ENCODE measurements at regions of chr9 and their contacts with region 1.

Region 1: DNA sequence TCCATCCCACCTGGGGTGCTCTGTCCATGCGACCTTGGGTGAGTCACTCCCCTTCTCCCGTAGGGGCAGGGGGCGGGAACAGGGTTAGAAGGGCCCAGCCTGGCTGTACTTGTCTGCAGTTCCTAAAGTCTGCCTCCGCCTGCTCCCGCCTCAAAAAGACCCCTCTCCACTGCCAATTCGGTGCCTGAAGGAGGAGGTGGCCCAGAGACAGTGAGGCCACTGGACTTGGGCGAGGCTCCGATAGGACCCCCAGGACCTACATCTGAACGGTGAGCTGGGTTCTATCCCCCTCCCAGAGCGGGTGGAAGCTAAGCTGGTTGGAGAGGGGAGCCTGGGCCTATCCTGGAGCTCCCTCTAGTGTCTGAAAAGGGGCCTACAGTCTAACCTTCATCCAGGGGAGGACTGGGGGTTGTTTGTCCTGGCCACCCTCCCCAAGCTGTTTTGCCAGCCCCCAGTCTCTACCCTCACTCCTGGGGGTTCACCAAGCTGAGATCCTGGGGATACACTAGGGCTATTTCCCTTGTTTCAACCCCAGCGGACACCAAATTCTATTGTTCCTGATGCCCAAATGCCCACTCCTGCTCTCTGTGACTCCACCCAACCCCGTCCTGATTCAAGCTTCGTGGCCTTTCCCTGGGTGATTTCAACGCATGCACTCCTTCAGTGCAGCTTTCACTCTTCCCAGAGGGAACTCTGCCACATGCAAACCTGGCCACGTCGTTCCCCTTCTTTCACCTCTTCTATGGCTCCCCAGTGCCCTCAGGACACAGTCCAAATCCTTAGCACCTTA is 6.1 kb upstream of the CRB2 start:
- DNase-seq: peak; percentile 85 to 89 (median 87)
- ATAC-seq: peak; percentile 86
- H3K4me3 ChIP-seq: peak overlapping the region; percentile 21; the same call in 1 of the 2 replicates
- H3K27ac ChIP-seq: no peak overlapping the region; the same call in 2 of the 3 replicates
- H3K4me1 ChIP-seq: peaks cover 10 to 32% of the 10 kb centered on the region in 2 experiments; a peak in 3 of 5 replicates
- H3K27me3 ChIP-seq: peaks cover 2 to 15% of the 10 kb centered on the region in 2 experiments; a peak in 3 of 5 replicates
- CTCF ChIP-seq: peak; percentile 93 to 96 (median 96)
- EP300 ChIP-seq: no peak
- POLR2A ChIP-seq: no peak
- RAD21 ChIP-seq: peak; percentile 98 to 99

Region 2: GRCh38 chr9:122464633-122465567 is 885.0 kb before region 1 on chr9:
- CTCF ChIA-PET with region 1: no interaction called
- POLR2A ChIA-PET with region 1: no interaction called
- in situ Hi-C with region 1: loop called (anchors 10 kb)
- intact Hi-C with region 1: loop called (anchors 2 kb)
- DNase-seq: peak; percentile 51 to 82 (median 64)
- ATAC-seq: peak; percentile 92
- H3K4me3 ChIP-seq: peak overlapping the region; percentile 28
- H3K27ac ChIP-seq: no peak overlapping the region
- H3K4me1 ChIP-seq: peaks cover 0 to 3% of the 10 kb centered on the region in 2 experiments; a peak in 1 of 5 replicates
- H3K27me3 ChIP-seq: no peaks in the 10 kb centered on the region; a peak in 1 of 5 replicates
- CTCF ChIP-seq: peak; percentile 73 to 92 (median 78)
- EP300 ChIP-seq: no peak
- POLR2A ChIP-seq: no peak
- RAD21 ChIP-seq: peak; percentile 87 to 88

Region 3: DNA sequence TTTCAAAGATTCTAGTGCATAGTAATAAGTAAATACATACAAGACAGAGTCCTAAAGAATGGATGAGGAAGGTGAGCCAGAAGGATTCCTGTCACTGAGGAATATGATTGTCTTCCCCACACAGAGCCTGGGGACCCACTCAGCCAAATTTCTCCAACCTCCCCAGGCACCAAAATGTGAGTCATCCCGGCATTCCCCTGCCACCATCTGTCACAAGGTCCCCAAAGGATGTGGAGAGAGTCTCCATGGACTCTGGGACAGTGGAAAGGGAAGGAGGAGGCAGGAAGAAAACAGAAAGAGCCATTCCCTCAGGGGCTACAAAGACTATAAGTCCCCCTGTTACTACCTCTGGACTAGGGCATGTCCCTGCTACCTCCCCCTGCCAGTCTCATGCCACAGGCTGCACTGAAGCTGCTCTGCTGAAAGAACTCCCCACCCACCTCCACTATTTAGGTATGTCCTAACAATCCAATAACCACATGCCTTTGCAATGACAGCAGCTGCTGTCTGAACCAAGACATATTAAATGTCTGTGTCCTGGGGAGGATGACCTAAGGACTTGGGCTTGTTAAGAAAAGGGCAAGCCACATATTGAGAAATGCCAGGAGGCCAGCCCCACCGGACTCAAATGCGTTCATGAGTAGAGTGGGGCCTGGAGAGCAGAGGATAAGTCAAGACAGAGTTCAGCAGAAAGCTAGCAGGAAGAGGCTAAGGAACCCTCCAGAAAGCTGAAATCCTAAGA is 571.8 kb before region 1 on chr9:
- CTCF ChIA-PET with region 1: no interaction called
- POLR2A ChIA-PET with region 1: no interaction called
- in situ Hi-C with region 1: no loop called
- intact Hi-C with region 1: no loop called
- DNase-seq: no peak
- ATAC-seq: no peak
- H3K4me3 ChIP-seq: no peak overlapping the region
- H3K27ac ChIP-seq: no peak overlapping the region
- H3K4me1 ChIP-seq: no peaks in the 10 kb centered on the region
- H3K27me3 ChIP-seq: peaks cover 7 to 9% of the 10 kb centered on the region in 2 experiments; a peak in 3 of 5 replicates
- CTCF ChIP-seq: no peak
- EP300 ChIP-seq: no peak
- POLR2A ChIP-seq: no peak
- RAD21 ChIP-seq: no peak

Region 4: GRCh38 chr9:122996586-122996985 is 353.3 kb before region 1 on chr9:
- CTCF ChIA-PET with region 1: no interaction called
- POLR2A ChIA-PET with region 1: no interaction called
- in situ Hi-C with region 1: no loop called
- intact Hi-C with region 1: loop called (anchors 5 kb)
- DNase-seq: no peak
- ATAC-seq: no peak
- H3K4me3 ChIP-seq: no peak overlapping the region
- H3K27ac ChIP-seq: no peak overlapping the region
- H3K4me1 ChIP-seq: peaks cover 0 to 9% of the 10 kb centered on the region in 2 experiments; a peak in 2 of 5 replicates
- H3K27me3 ChIP-seq: no peaks in the 10 kb centered on the region
- CTCF ChIP-seq: no peak
- EP300 ChIP-seq: no peak
- POLR2A ChIP-seq: no peak
- RAD21 ChIP-seq: no peak

Region 5: GRCh38 chr9:123102375-123103110 is 247.3 kb before region 1 on chr9:
- CTCF ChIA-PET with region 1: interaction called, 25 read pairs
- POLR2A ChIA-PET with region 1: interaction called, 5 read pairs
- in situ Hi-C with region 1: no loop called
- intact Hi-C with region 1: loop called (anchors 5 kb)
- DNase-seq: no peak
- ATAC-seq: peak; percentile 48
- H3K4me3 ChIP-seq: no peak overlapping the region
- H3K27ac ChIP-seq: no peak overlapping the region
- H3K4me1 ChIP-seq: no peaks in the 10 kb centered on the region
- H3K27me3 ChIP-seq: no peaks in the 10 kb centered on the region
- CTCF ChIP-seq: peak; percentile 19 to 44 (median 33); a peak in 4 of 6 replicates
- EP300 ChIP-seq: no peak
- POLR2A ChIP-seq: no peak
- RAD21 ChIP-seq: peak in 1 of 2 experiments; percentile 44; a peak in 2 of 4 replicates

Region 6: GRCh38 chr9:123262338-123262737 is 87.5 kb before region 1 on chr9:
- CTCF ChIA-PET with region 1: no interaction called
- POLR2A ChIA-PET with region 1: no interaction called
- in situ Hi-C with region 1: no loop called
- intact Hi-C with region 1: no loop called
- DNase-seq: no peak
- ATAC-seq: no peak
- H3K4me3 ChIP-seq: no peak overlapping the region
- H3K27ac ChIP-seq: no peak overlapping the region
- H3K4me1 ChIP-seq: peaks cover 9 to 32% of the 10 kb centered on the region in 2 experiments
- H3K27me3 ChIP-seq: no peaks in the 10 kb centered on the region
- CTCF ChIP-seq: no peak
- EP300 ChIP-seq: no peak
- POLR2A ChIP-seq: no peak
- RAD21 ChIP-seq: no peak

Region 7: DNA sequence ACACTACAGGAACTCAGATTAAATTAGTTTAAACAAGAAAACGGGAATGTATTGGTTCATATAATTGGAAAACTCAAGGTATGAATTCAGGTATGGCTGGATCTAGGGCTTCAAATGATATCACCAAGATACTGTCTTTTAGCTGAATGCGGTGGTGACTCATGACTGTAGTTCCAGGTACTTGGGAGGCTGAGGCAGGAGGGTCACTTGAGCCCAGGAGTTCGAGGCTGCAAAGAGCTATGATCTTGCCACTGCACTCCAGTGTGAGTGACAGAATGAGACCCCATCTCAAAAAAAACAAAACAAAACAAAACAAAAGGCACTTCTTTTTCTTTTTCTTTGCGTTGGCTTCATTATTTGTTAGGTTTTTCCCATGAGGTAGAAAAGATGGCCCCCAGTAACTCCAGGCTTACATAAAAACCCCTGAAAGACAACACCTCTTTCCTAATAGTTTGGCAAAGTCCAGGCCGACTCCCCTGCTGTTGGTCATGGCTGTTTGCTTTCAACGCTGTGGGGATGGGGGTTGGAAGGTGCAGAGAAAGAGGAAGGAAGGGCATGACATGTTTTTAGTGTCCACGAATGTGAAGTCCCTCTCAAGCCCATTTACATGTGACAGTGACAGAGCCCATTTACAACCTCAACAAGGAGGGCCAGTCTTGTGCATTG is 33.7 kb before region 1 on chr9:
- CTCF ChIA-PET with region 1: no interaction called
- POLR2A ChIA-PET with region 1: no interaction called
- in situ Hi-C with region 1: no loop called
- intact Hi-C with region 1: no loop called
- DNase-seq: peak in 1 of 4 experiments; percentile 13
- ATAC-seq: peak; percentile 58
- H3K4me3 ChIP-seq: no peak overlapping the region
- H3K27ac ChIP-seq: peak overlapping the region; percentile 57; the same call in 2 of the 3 replicates
- H3K4me1 ChIP-seq: peaks cover 22 to 27% of the 10 kb centered on the region in 2 experiments; a peak in 4 of 5 replicates
- H3K27me3 ChIP-seq: no peaks in the 10 kb centered on the region; a peak in 1 of 5 replicates
- CTCF ChIP-seq: no peak
- EP300 ChIP-seq: no peak
- POLR2A ChIP-seq: no peak
- RAD21 ChIP-seq: no peak

Region 8: GRCh38 chr9:123389070-123389469 is 39.2 kb after region 1 on chr9:
- CTCF ChIA-PET with region 1: interaction called, 75 read pairs
- POLR2A ChIA-PET with region 1: no interaction called
- in situ Hi-C with region 1: loop called (anchors 5 kb)
- intact Hi-C with region 1: loop called (anchors 1 kb)
- DNase-seq: no peak
- ATAC-seq: no peak
- H3K4me3 ChIP-seq: no peak overlapping the region
- H3K27ac ChIP-seq: no peak overlapping the region
- H3K4me1 ChIP-seq: peaks cover 0 to 24% of the 10 kb centered on the region in 2 experiments; a peak in 2 of 5 replicates
- H3K27me3 ChIP-seq: no peaks in the 10 kb centered on the region
- CTCF ChIP-seq: no peak
- EP300 ChIP-seq: no peak
- POLR2A ChIP-seq: no peak
- RAD21 ChIP-seq: no peak

Measured in K562 (cell line).